PC-9 (cell line): ENCODE measurements at regions of chr17 and their contacts with region 1.

Region 1: DNA sequence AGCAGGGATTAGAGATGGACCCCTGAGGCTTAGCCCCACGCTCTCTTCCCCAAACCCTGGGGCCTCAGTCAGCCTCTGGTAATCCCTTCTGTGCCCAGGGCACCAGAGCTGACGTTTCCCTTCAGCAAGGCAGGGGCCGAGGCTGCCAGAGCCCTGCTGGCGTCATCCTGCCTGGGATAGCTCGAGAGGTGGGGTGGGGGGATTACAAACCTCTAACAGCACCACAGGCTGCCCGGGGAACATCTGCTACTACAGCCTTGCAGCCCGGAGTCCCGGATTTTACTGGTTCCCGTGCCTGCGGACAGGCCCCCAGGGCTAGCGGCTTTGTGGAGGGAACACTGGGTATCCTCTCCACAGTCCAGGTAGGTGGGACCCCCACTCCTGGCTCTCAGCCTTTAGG is at the start of gene AANAT:
- DNase-seq: no peak
- H3K4me3 ChIP-seq: no peak within 1 kb of the TSS
- H3K27ac ChIP-seq: no peak within 1 kb of the TSS
- H3K4me1 ChIP-seq: no peaks in the 10 kb centered on the region
- H3K27me3 ChIP-seq: no peaks in the 10 kb centered on the region
- CTCF ChIP-seq: no peak
- total RNA-seq, gene AANAT: 0.65 TPM in 1 of 2 replicates, not detected in the other

Region 2: DNA sequence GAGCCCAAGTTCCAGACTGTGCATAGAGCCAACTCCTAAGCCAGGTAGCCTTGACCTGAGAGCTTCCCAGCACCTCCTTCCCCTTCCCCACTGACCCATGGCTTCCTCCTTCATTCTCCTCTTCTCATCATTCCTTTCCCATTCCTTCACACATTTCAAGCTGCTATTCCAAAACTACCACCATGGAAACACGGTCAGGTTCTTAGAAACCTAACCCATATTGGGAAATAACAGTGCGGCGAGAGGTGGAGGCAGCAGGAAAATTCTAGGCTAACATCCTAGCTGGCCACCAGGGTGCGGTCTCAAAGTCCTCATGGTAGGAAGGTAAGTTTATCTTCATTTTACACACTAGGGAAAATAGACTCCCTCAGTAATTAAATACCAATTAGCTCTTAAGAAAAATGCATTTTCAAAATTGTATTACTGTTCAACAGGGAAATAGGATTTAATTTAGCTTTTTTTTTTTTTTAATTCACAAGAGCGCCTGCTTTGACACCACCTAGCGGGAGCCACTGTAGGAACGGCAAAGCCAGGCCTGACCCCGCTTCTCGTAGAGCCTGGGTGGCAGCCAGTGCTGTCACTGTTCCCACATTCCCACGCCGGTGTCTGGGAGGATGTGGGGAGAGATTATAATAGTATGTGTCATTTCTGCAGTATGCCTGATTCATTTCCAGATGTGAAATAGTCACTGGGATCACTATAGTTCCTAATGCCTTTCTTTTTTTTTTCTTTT is 96.9 kb before region 1 on chr17:
- CTCF ChIA-PET with region 1: interaction called, 18 read pairs
- POLR2A ChIA-PET with region 1: no interaction called
- intact Hi-C with region 1: no loop called
- DNase-seq: peak; percentile 66 to 80
- H3K4me3 ChIP-seq: no peak overlapping the region
- H3K27ac ChIP-seq: no peak overlapping the region
- H3K4me1 ChIP-seq: no peaks in the 10 kb centered on the region
- H3K27me3 ChIP-seq: no peaks in the 10 kb centered on the region
- CTCF ChIP-seq: peak; percentile 59; the same call in 1 of the 2 replicates

Region 3: GRCh38 chr17:76506408-76507349 is 39.3 kb after region 1 on chr17:
- CTCF ChIA-PET with region 1: no interaction called
- POLR2A ChIA-PET with region 1: interaction called, 5 read pairs
- intact Hi-C with region 1: loop called (anchors 1 kb)
- DNase-seq: peak; percentile 43 to 87
- H3K4me3 ChIP-seq: no peak overlapping the region
- H3K27ac ChIP-seq: no peak overlapping the region
- H3K4me1 ChIP-seq: no peaks in the 10 kb centered on the region
- H3K27me3 ChIP-seq: no peaks in the 10 kb centered on the region
- CTCF ChIP-seq: peak; percentile 86

Region 4: GRCh38 chr17:76547184-76547641 is 79.8 kb after region 1 on chr17:
- CTCF ChIA-PET with region 1: interaction called, 10 read pairs
- POLR2A ChIA-PET with region 1: no interaction called
- intact Hi-C with region 1: loop called (anchors 1 kb)
- DNase-seq: peak in 1 of 2 experiments; percentile 47
- H3K4me3 ChIP-seq: no peak overlapping the region
- H3K27ac ChIP-seq: no peak overlapping the region
- H3K4me1 ChIP-seq: peaks cover 15% of the 10 kb centered on the region
- H3K27me3 ChIP-seq: no peaks in the 10 kb centered on the region
- CTCF ChIP-seq: peak; percentile 69

Region 5: DNA sequence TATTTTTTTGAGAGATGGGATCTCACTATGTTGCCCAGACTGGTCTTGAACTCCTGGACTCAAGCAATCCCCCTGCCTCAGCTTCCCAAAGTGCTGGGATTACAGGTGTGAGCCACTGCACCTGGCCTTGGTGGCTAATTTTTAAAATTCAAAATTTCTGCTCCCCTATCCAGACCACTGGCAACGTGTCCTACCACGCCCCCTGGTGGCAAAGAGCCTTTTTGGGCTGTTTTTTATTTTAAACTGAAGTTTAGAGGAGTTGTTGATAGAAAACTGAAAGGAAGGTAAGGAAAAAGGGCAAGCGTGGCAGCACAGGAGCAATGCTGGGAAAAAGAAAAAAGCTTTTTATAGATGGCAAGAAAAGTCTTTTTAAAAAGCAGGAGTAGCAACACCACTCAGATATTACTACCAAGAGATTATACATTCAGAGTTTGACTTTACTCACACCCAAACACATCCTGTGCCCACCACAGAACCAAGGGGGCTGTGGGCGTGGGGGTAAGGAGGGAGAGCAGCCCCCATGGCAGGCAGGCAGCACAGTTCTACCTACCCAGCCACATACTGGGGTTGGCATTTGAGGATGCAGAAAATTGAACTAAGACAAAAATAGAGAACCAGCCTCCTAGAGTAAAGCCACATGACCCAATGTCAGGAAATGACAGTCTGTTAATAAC is 247.6 kb after region 1 on chr17:
- CTCF ChIA-PET with region 1: no interaction called
- POLR2A ChIA-PET with region 1: no interaction called
- intact Hi-C with region 1: loop called (anchors 10 kb)
- DNase-seq: peak in 1 of 2 experiments; percentile 61
- H3K4me3 ChIP-seq: no peak overlapping the region
- H3K27ac ChIP-seq: no peak overlapping the region
- H3K4me1 ChIP-seq: 0 out of 2 replicates have a peak, but pooled peaks cover 6% of the 10 kb centered on the region
- H3K27me3 ChIP-seq: no peaks in the 10 kb centered on the region
- CTCF ChIP-seq: peak; percentile 86

Region 6: DNA sequence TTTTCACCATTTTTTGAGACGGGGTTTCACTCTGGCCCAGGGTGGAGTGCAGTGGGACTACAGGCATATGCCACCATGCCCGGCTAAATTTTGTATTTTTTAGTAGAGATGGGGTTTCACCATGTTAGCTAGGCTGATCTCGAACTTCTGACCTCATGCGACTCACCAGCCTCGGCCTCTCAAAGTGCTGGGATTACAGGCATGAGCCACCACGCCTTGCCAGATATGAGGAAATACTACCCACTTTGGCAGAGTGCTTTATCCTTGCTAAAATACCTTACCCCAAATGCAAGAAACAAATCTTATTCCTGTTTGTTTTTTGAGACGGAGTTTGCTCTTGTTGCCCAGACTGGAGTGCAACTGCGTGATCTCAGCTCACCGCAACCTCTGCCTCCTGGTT is 338.0 kb after region 1 on chr17:
- CTCF ChIA-PET with region 1: no interaction called
- POLR2A ChIA-PET with region 1: no interaction called
- intact Hi-C with region 1: no loop called
- DNase-seq: peak; percentile 15 to 42
- H3K4me3 ChIP-seq: no peak overlapping the region
- H3K27ac ChIP-seq: no peak overlapping the region
- H3K4me1 ChIP-seq: no peaks in the 10 kb centered on the region
- H3K27me3 ChIP-seq: no peaks in the 10 kb centered on the region
- CTCF ChIP-seq: no peak

Region 7: GRCh38 chr17:77061669-77062068 is 594.3 kb after region 1 on chr17:
- CTCF ChIA-PET with region 1: no interaction called
- POLR2A ChIA-PET with region 1: no interaction called
- intact Hi-C with region 1: loop called (anchors 10 kb)
- DNase-seq: no peak
- H3K4me3 ChIP-seq: no peak overlapping the region
- H3K27ac ChIP-seq: no peak overlapping the region
- H3K4me1 ChIP-seq: no peaks in the 10 kb centered on the region
- H3K27me3 ChIP-seq: no peaks in the 10 kb centered on the region
- CTCF ChIP-seq: no peak